BJ (cell line): ENCODE measurements at regions of chr3 and their contacts with region 1.

Region 1: GRCh38 chr3:52291508-52292181 is 4.0 kb downstream of the GLYCTK start:
- DNase-seq: no peak
- H3K4me3 ChIP-seq: no peak overlapping the region
- H3K27me3 ChIP-seq: no peaks in the 10 kb centered on the region
- CTCF ChIP-seq: peak; percentile 57

Region 2: GRCh38 chr3:52278510-52279069 is 13.1 kb before region 1 on chr3 and contains the start of gene WDR82:
- CTCF ChIA-PET with region 1: interaction called, 4 read pairs
- POLR2A ChIA-PET with region 1: interaction called, 19 read pairs
- DNase-seq: peak; percentile 42
- H3K4me3 ChIP-seq: peak within 1 kb of the TSS; percentile 68
- H3K27me3 ChIP-seq: no peaks in the 10 kb centered on the region
- CTCF ChIP-seq: peak; percentile 69
- polyA plus RNA-seq, gene WDR82: 42.3 and 62.8 TPM in 2 replicates

Region 3: GRCh38 chr3:52333869-52334557 is 42.4 kb after region 1 on chr3:
- CTCF ChIA-PET with region 1: interaction called, 65 read pairs
- POLR2A ChIA-PET with region 1: no interaction called
- DNase-seq: no peak
- H3K4me3 ChIP-seq: no peak overlapping the region
- H3K27me3 ChIP-seq: no peaks in the 10 kb centered on the region
- CTCF ChIP-seq: no peak